CD8-positive, alpha-beta memory T cell (primary cell): ENCODE measurements at regions of chr15 and their contacts with region 1.

Region 1: GRCh38 chr15:38683382-38684242 is 119.0 kb upstream of the RASGRP1 start:
- DNase-seq: peak; percentile 49 to 80 (median 67)
- H3K4me3 ChIP-seq: no peak overlapping the region
- H3K4me3 Mint-ChIP-seq: peak overlapping the region; percentile 5 to 71 (median 40)
- H3K27ac ChIP-seq: no peak overlapping the region
- H3K27ac Mint-ChIP-seq: peak overlapping the region; percentile 12 to 97 (median 91)
- H3K4me1 ChIP-seq: peaks cover 64% of the 10 kb centered on the region
- H3K4me1 Mint-ChIP-seq: peaks cover 66 to 74% (median 71%) of the 10 kb centered on the region in 3 donors
- H3K27me3 ChIP-seq: no peaks in the 10 kb centered on the region
- H3K27me3 Mint-ChIP-seq: no peaks in the 10 kb centered on the region

Region 2: GRCh38 chr15:38647683-38648082 is 35.9 kb before region 1 on chr15:
- CTCF ChIA-PET with region 1: interaction called, 103 read pairs
- POLR2A ChIA-PET with region 1: interaction called, 36 read pairs
- DNase-seq: no peak
- H3K4me3 ChIP-seq: no peak overlapping the region
- H3K4me3 Mint-ChIP-seq: peak overlapping the region in 1 of 7 donors; percentile 12
- H3K27ac ChIP-seq: no peak overlapping the region
- H3K27ac Mint-ChIP-seq: peak overlapping the region; percentile 50 to 87 (median 74)
- H3K4me1 ChIP-seq: peaks cover 80% of the 10 kb centered on the region
- H3K4me1 Mint-ChIP-seq: peaks cover 74 to 86% (median 84%) of the 10 kb centered on the region in 3 donors
- H3K27me3 ChIP-seq: no peaks in the 10 kb centered on the region
- H3K27me3 Mint-ChIP-seq: no peaks in the 10 kb centered on the region

Region 3: DNA sequence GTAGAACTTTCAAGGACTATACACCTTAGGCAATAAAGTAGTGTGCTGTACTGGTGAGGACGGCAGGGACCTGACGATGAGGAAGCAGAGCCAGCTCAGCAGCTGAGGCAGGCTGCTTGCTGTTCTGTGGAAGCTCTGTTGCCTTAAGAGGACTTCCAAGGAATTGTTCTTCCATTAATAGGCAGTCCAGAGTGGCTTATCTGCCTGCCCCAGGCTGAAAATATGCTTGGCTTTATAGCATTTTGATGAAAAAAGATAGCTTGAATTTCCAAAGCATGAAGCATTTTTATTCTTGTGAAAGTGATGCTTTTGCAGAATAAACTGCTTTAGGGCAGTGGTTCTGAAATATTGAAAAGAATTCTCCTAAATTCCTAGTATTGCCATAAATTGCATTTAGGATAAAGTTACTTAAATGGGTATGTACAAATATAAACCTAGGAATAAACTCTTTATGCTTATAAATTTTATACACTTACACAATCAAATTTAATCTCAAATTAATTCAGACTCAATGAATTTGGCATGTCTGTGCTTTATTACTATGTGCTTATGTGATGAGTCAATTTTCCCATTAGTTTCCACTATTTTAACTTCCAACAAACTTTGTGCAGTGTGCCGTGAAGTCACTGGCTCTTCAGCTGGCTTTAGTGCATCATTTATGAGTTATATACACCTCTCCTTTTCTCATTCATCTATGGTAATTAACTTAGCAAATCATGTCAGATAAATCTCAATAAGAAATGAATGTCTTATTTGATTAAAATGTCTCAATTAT is 112.0 kb after region 1 on chr15:
- CTCF ChIA-PET with region 1: no interaction called
- POLR2A ChIA-PET with region 1: no interaction called
- DNase-seq: no peak
- H3K4me3 ChIP-seq: no peak overlapping the region
- H3K4me3 Mint-ChIP-seq: no peak overlapping the region
- H3K27ac ChIP-seq: no peak overlapping the region
- H3K27ac Mint-ChIP-seq: no peak overlapping the region
- H3K4me1 ChIP-seq: no peaks in the 10 kb centered on the region
- H3K4me1 Mint-ChIP-seq: no peaks in the 10 kb centered on the region
- H3K27me3 ChIP-seq: peaks cover 2% of the 10 kb centered on the region
- H3K27me3 Mint-ChIP-seq: peaks cover 25 to 28% of the 10 kb centered on the region in 2 donors